ENCODE measurements at regions of chr11 and their contacts with region 1.

Region 1: GRCh38 chr11:9613118-9613829 is 39.8 kb downstream of the WEE1 start:
- DNase-seq: peak; percentile 96
- ATAC-seq: peak; percentile 93

Region 2: GRCh38 chr11:9534791-9535781 is 78.2 kb before region 1 on chr11:
- intact Hi-C with region 1: loop called (anchors 2 kb)
- DNase-seq: peak; percentile 81
- ATAC-seq: peak; percentile 73

Region 3: DNA sequence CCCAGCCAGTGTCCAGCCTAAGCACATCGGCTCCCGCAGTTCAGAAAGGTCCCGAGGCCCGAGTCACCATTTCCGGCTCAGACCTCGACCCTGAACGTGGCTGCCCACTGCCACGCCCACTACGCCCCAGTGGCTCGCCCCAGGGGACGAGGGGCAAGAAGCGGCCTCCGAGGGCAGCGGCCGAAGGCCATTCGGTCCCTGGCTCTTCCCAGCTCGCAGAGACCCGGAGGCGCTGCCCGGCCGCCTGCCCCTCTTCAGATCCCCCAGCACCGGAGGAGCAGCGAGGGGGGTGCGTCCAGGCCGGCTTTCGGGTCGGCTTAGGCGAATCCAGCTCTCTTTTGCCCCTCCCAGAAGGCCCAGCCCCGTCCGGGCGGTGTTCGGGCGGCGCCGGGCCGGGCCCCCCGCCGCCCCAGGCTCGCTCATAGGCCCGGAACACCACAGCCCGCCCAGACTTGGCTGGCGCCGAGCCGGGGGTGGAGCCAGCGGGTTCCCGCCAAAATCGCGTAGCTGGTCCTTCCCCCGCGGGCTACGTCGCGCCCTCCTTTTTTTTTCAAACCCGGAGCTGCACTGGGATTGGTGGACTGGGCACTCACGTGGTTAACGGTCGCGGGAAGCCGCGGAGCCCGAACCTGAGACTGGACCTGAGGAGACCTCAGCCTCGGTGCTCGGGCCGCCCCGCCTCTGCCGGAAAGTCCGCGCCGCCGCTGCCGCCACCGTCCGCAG is 40.1 kb before region 1 on chr11 and contains the start of gene WEE1:
- intact Hi-C with region 1: loop called (anchors 2 kb)
- DNase-seq: peak; percentile 98
- ATAC-seq: peak; percentile 97
- total RNA-seq, gene WEE1: 40.1 TPM

Region 4: DNA sequence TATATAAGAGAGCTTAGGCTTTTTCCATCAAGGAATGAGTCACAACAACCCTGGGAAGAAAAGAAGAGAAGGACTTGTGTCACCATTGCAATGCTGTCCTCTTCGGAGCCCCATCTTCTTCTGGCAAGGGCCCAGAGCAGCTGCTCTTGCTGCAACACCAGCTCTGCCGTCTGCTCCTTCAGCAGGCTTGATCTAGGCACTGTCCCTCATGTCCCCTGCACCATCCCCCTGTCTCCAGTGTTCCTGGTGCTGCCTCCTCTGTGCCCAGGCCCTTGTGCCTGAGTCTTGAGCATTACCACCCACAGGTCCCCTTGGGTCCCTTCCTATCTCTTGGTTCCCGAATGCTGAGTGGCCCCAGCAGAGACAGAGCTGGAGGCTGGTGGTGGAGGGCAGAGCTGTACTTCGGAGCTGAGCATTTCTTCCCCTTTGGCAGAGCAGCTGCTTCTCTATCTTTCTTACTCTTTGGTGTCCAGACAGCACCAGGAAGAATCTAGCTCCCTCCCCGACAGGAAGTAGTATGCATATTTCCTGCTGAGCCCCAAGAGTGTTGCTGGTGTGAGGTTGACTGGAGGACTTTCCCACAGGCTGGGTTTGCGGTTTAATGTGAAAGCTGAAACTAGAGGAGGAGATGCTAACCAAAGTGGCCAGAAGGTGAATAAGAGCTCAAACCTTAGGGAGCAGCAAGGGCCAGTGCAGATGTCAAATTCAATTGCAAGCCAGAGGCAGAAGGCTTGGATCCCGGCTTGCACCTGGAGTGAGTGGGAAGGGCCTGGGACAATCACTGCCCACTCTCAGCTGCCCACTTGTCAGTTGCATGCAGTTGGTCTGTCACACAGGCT is 12.0 kb before region 1 on chr11:
- intact Hi-C with region 1: no loop called
- DNase-seq: no peak
- ATAC-seq: peak; percentile 68

Region 5: DNA sequence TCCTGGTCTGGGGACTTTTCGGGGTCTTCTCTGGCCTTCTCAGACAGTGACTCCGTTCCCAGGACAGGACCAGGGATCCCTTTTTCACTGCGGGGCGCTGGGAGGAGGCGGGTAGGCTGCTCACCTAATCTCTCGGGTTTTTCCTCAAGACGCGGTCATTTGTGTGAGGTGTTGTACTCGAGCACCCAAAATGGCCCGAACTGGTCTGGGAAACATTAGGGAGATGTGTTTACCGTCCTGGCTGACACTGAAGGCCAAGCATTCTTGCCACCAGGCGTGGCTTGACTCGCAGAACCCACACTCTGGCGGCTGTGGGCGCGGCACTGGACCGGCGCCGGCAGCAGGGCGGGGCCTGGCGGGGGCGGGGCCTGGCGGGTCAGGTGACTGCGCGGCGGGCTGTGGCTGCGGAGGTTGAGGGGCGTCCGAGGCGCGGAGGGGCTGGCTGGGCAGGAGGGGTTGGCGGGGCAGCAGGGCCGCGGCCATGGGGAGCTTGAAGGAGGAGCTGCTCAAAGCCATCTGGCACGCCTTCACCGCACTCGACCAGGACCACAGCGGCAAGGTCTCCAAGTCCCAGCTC is 50.5 kb after region 1 on chr11 and contains the start of gene SWAP70:
- intact Hi-C with region 1: loop called (anchors 2 kb)
- DNase-seq: peak; percentile 96
- ATAC-seq: peak; percentile 97
- total RNA-seq, gene SWAP70: 22.6 TPM

Region 6: DNA sequence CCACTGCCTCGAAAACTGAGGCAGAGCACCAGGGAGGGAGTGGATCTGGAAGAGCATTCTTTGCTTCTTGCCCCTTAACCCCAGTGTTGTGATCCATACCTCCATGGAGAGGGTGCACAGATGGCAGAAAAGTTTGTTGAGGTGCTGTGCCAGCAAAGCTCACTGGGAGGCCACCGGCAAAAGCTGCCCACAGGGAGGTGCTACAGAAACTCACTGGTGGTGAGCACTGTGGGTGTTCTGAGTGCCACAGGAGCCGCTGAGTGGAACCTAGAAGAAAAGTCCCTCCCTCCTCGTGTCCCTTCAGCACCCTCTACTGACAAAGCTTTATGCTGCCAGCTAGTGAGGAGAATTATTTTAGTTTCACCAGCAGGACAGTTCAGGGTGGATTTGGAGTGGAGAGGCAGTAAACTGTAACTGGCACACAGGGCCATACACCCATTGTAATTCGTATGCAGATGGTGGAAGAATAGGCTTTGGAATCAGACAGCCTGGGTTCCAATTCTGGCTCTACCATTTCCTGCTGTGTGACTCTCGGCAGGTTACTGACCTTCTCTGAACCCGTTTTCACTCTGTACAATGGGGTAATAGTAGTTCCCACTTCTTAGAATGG is 135.2 kb after region 1 on chr11:
- intact Hi-C with region 1: loop called (anchors 2 kb)
- DNase-seq: no peak
- ATAC-seq: peak; percentile 88

Region 7: GRCh38 chr11:9972989-9973388 is 359.7 kb after region 1 on chr11:
- intact Hi-C with region 1: loop called (anchors 5 kb)
- DNase-seq: no peak
- ATAC-seq: peak; percentile 80